Activated B cell treated with CpG ODN at 0.5 μM for 24 hours (primary cell): ENCODE measurements at regions of chrX and their contacts with region 1.

Region 1: DNA sequence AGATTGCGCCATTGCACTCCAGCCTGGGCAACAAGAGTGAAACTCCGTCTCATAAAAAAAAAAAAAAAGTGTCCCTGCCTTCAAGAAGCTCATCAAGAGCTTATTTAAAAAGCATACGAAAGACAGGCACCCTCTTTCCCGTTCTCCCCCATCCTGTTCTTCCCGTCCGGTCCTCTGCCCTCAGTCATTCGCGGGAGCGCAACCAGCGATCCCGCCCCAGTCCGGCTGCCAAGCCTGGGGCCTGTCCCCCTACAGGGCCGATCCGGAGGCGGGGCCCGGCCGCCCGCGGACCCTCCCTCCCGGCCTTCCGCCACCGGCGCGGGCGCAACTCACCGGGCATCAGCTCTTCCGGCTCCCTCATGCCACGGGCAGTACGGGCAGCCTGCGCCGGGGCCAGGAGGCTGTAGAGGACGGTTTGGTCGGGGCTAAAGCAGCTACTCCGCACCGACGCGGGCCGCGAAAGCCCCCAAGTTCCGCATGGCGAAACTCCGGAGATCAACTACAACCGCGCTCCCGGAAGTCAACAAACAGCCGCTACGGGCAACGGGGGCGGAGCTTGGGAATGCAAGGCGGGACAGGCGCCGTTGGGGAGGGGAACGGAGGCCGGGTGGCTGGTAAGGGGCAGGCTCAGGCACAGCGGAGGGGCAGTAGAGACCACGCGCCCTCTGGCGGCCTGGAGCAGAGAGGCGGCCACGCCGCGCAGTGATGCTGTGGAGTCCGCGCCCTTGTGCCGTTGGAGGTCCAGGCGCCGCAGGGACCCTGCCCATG is at the start of gene RPGR:
- DNase-seq: peak; percentile 83
- ATAC-seq: peak; percentile 96
- H3K4me3 Mint-ChIP-seq: peak within 1 kb of the TSS; percentile 93
- H3K27ac Mint-ChIP-seq: peak within 1 kb of the TSS; percentile 98
- H3K4me1 Mint-ChIP-seq: peaks cover 17% of the 10 kb centered on the region
- H3K27me3 Mint-ChIP-seq: no peaks in the 10 kb centered on the region
- CTCF ChIP-seq: no peak
- total RNA-seq, gene RPGR: 12.4 and 13.1 TPM in 2 replicates

Region 2: GRCh38 chrX:37509349-37509748 is 817.8 kb before region 1 on chrX:
- CTCF ChIA-PET with region 1: no interaction called
- POLR2A ChIA-PET with region 1: no interaction called
- intact Hi-C with region 1: loop called (anchors 5 kb)
- DNase-seq: no peak
- ATAC-seq: no peak
- H3K4me3 Mint-ChIP-seq: no peak overlapping the region
- H3K27ac Mint-ChIP-seq: no peak overlapping the region
- H3K4me1 Mint-ChIP-seq: no peaks in the 10 kb centered on the region
- H3K27me3 Mint-ChIP-seq: no peaks in the 10 kb centered on the region
- CTCF ChIP-seq: no peak

Region 3: GRCh38 chrX:37846934-37847732 is 480.1 kb before region 1 on chrX and contains the start of gene DYNLT3:
- CTCF ChIA-PET with region 1: no interaction called
- POLR2A ChIA-PET with region 1: no interaction called
- intact Hi-C with region 1: loop called (anchors 1 kb)
- DNase-seq: peak; percentile 72
- ATAC-seq: peak; percentile 99
- H3K4me3 Mint-ChIP-seq: peak within 1 kb of the TSS; percentile 81
- H3K27ac Mint-ChIP-seq: peak within 1 kb of the TSS; percentile 86
- H3K4me1 Mint-ChIP-seq: peaks cover 20% of the 10 kb centered on the region
- H3K27me3 Mint-ChIP-seq: no peaks in the 10 kb centered on the region
- CTCF ChIP-seq: no peak
- total RNA-seq, gene DYNLT3: 17.7 and 19.1 TPM in 2 replicates

Region 4: DNA sequence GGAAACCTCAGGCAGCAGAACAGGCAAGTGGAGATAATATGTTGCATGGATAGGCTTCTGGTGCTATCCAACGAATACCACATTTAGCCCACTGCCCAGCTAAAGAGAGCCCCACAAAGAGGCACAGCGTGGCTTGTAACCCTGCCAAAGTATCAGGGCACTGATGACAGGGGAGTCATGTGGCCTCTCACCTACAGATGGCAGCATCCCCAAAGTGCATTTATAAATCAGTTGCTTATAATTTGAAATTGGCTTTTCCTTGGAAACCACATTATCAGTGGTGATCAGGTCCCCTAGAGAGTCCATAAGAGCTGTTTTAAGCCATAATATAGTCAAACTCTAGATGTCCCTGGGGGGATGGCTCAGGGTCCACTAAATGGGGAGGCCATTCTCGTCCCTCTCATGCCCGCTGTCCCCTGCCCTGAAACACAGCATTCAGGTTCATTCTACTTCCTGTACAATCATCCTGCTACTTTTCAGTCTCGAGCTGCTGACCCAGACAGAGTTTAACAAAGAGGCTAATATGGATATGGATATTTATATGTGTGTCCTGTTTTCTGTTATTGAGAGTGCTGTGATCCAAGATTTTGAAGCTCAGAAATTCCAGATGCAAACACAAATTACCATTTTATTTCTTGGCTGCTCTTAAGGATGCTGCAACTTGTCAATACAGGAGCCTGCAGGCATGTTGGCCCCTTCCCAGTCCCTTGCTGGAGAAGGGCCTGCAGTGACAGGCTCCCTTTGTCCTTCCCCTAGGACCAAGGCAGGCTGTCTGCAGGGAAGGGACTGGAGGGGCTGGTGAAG is 135.0 kb before region 1 on chrX:
- CTCF ChIA-PET with region 1: interaction called, 7 read pairs
- POLR2A ChIA-PET with region 1: no interaction called
- intact Hi-C with region 1: loop called (anchors 1 kb)
- DNase-seq: no peak
- ATAC-seq: no peak
- H3K4me3 Mint-ChIP-seq: no peak overlapping the region
- H3K27ac Mint-ChIP-seq: no peak overlapping the region
- H3K4me1 Mint-ChIP-seq: no peaks in the 10 kb centered on the region
- H3K27me3 Mint-ChIP-seq: peaks cover 4% of the 10 kb centered on the region
- CTCF ChIP-seq: no peak

Region 5: DNA sequence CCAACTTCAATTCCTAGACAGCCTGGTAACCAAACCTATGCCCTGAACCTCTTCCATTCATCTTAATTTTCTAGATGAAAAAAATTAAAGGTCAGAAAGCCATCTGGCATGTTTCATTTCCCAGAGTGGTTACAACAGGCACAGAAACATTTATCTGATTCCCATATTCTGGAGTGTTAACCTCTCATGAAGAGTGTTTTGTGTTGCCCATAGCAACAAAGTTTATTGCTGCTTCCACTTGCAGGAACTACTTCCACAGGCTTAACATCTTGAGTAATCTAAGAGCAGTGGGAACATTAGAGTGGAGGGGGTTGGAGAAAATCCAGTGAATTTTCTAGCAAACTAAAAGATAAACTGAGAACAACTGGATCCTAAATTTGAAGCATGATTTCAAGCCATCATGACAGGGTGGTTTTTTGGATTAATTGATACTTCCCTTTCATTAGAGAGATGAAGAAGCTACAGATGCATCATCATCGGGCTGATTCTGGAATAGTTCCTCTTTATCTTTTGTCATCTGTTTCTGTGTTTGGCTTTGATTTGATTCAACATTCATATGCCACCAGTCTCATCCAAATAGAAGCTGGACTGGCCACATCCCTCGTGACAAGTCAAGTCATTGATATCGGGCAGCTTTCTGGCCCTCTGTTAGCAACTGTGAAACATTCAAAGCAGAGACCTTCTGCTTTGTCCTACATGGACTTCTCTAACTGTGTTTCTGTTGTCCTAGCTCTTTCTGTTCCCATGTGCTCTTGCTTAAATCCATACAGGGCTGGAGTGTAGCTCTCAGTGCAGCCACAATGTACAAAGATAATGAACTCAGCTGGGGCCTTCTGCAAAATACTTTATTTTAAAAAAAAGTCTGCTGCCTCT is 641.4 kb after region 1 on chrX:
- CTCF ChIA-PET with region 1: no interaction called
- POLR2A ChIA-PET with region 1: no interaction called
- intact Hi-C with region 1: no loop called
- DNase-seq: no peak
- ATAC-seq: no peak
- H3K4me3 Mint-ChIP-seq: no peak overlapping the region
- H3K27ac Mint-ChIP-seq: no peak overlapping the region
- H3K4me1 Mint-ChIP-seq: no peaks in the 10 kb centered on the region
- H3K27me3 Mint-ChIP-seq: no peaks in the 10 kb centered on the region
- CTCF ChIP-seq: no peak